Calu3 (cell line): ENCODE measurements at regions of chr16 and their contacts with region 1.

Region 1: GRCh38 chr16:53415504-53415903 is 18.8 kb upstream of the RBL2 start:
- DNase-seq: peak; percentile 56
- H3K4me3 Mint-ChIP-seq: peak overlapping the region; percentile 70
- H3K27ac Mint-ChIP-seq: no peak overlapping the region
- H3K4me1 Mint-ChIP-seq: peaks cover 21% of the 10 kb centered on the region
- H3K27me3 Mint-ChIP-seq: no peaks in the 10 kb centered on the region
- CTCF ChIP-seq: no peak

Region 2: GRCh38 chr16:53374800-53375199 is 40.7 kb before region 1 on chr16:
- CTCF ChIA-PET with region 1: interaction called, 3 read pairs
- intact Hi-C with region 1: loop called (anchors 2 kb)
- DNase-seq: no peak
- H3K4me3 Mint-ChIP-seq: no peak overlapping the region
- H3K27ac Mint-ChIP-seq: no peak overlapping the region
- H3K4me1 Mint-ChIP-seq: peaks cover 18% of the 10 kb centered on the region
- H3K27me3 Mint-ChIP-seq: no peaks in the 10 kb centered on the region
- CTCF ChIP-seq: no peak

Region 3: DNA sequence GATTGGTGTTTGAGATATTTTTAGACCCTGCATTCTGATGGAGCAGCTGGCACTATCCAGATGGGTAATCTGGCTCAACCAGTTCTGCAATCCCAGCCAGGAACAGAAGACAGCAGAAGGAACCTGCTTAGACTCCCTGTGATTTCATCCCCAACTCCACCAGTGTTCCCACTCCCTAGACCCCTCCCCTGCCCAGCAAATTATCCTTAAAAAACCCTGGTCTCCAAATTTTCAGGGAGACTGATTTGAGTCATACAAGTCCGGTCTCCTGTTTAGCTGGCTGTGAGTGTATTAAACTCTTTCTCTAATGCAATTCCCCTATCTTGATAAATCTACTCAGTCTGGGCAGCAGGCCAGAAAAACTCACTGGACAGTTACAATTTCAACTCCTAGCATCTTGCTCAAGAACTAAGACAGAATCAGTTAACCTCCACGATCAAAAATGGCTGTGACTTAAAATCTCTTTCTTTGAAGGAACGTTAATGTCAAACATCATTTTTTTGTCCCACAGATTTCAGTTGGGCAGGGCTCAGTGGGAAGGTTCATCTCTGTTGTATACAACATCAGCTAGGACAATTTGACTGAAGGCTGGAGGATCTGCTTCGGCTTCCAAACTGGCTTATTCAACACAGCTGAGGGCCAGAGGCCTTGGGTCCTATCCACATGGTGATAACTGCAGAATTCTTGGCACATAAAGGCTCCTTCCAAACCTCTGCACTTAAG is 13.9 kb after region 1 on chr16:
- CTCF ChIA-PET with region 1: interaction called, 3 read pairs
- intact Hi-C with region 1: loop called (anchors 2 kb)
- DNase-seq: peak; percentile 58
- H3K4me3 Mint-ChIP-seq: peak overlapping the region; percentile 24
- H3K27ac Mint-ChIP-seq: peak overlapping the region; percentile 31
- H3K4me1 Mint-ChIP-seq: peaks cover 42% of the 10 kb centered on the region
- H3K27me3 Mint-ChIP-seq: no peaks in the 10 kb centered on the region
- CTCF ChIP-seq: no peak